ACHN (cell line): ENCODE measurements at regions of chr7 and their contacts with region 1.

Region 1: DNA sequence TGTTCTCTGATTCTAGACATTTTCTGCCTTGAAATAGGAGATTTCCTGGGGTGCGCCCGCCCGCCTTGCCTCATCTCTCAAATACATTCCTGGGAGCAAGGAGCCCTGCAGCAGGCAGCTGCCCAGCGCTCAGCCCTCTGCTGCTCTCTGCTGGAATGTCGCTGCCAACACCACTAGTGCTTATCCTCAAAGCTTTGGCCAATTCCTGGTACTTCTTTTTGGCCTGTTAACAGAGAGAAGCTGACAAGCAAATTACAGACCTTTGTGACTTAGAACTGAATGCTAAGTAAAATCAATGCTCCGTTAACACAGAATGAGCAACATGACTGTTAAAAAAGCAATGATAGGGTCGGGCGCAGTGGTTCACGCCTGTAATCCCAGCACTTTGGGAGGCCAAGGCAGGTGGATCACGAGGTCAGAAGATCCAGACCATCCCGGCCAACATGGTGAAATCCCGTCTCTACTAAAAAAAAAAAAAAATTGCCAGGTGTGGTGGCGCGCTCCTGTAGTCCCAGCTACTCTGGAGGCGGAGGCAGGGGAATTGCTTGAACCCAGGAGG is 41.9 kb upstream of the SYPL1 start:
- DNase-seq: peak; percentile 88

Region 2: GRCh38 chr7:106022193-106022821 is 131.7 kb before region 1 on chr7:
- in situ Hi-C with region 1: no loop called
- DNase-seq: no peak

Region 3: GRCh38 chr7:106056513-106057203 is 97.3 kb before region 1 on chr7:
- in situ Hi-C with region 1: loop called (anchors 25 kb)
- DNase-seq: peak; percentile 82

Region 4: DNA sequence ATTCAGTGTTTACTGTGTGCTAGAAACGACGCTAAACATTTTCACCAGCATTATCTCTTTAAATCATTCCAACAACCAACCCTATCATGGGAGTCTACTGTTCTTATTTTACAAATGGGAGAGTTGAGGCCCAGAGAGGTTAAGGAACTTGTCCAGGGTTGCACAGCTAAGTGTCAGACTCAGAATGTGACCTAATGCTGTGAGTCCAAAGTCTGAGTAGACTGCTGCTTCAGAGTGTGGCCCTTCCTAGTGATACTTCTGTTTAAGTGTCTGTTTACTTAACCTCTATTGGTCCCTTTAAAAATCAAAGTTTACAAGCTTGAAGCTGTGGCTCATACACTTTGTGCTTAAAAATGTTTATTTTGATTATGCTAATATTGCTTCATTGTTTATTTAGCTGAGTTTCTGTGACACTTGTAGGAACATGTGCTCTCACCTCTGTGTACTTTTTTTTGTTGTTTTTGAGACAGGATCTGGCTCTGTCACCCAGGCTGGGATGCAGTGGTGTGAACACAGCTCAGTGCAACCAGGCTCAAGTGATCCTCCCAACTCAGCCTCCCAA is 42.6 kb after region 1 on chr7:
- in situ Hi-C with region 1: no loop called
- DNase-seq: no peak